GM10248 (cell line): ENCODE measurements at regions of chr11 and their contacts with region 1.

Region 1: GRCh38 chr11:108483163-108483562 is 15.0 kb downstream of the POGLUT3 start:
- DNase-seq: no peak
- CTCF ChIP-seq: no peak

Region 2: GRCh38 chr11:108497317-108498045 is 14.3 kb after region 1 on chr11:
- CTCF ChIA-PET with region 1: interaction called, 19 read pairs
- POLR2A ChIA-PET with region 1: no interaction called
- DNase-seq: peak; percentile 69
- CTCF ChIP-seq: no peak